ENCODE measurements at regions of chr3 and their contacts with region 1.

Region 1: DNA sequence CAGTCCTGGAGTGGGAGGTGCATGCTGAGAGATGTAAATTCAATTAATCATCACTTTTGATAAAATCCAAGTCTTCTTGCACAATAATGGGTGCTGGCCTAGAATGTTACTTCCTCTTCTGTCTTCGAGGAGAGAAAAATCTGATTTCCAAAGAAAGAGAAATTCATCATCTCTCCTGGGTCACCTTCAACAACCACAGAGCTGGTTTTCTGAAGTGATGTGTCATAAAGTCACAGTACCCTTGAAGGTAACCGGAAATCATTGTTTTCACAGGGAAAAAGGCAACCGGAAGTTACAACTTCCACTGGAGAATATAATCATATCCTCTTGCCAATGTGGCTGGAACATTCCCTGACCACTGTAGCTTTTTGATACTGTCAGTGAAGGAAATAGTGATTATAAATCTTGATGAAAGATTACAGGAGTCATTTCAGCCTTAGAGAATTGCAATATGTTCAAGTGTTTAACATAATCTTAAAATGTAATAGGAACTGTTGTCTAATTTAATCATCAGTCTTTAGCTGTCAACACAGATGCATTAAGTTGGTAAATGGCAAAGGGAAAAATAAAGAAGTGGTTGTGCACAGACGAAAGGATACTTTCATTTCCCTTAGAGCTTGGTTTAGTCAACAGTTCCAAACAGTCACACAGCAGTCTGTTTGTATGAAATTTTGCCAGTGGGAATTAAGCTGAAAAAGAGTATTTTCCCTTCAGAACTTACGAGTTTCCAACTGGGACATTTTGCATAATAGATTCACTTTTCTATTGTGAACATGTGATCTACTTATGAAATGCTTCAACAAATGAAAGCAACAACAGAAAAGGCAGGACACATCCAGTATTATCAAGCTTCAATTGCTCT is 106.5 kb upstream of the SLC4A7 start:
- DNase-seq: no peak
- H3K4me3 ChIP-seq: no peak overlapping the region
- H3K27ac ChIP-seq: peak overlapping the region in 1 of 2 donors; percentile 59
- H3K4me1 ChIP-seq: no peaks in the 10 kb centered on the region
- H3K27me3 ChIP-seq: no peaks in the 10 kb centered on the region
- CTCF ChIP-seq: no peak
- POLR2A ChIP-seq: no peak

Region 2: DNA sequence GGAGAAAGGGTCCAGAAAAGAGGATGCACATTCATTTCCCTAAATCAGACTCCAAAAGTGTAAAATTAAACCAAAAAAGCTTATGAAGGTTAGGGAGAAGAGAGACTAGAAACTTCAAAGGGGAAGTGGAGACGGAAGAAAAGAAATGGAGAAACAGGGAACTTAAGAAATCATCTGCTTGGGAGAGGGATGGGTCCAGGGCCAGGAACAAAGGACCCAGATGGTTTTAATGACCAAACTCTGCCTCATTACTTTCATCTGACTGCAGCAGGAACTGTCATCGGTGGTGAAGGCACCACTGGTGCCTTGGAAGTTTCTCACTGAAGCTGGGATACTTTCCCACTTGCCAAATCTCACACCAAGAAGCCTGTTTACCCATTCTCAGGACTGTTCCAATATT is 36.0 kb before region 1 on chr3:
- intact Hi-C with region 1: no loop called
- DNase-seq: no peak
- H3K4me3 ChIP-seq: no peak overlapping the region
- H3K27ac ChIP-seq: no peak overlapping the region
- H3K4me1 ChIP-seq: no peaks in the 10 kb centered on the region
- H3K27me3 ChIP-seq: no peaks in the 10 kb centered on the region
- CTCF ChIP-seq: no peak
- POLR2A ChIP-seq: no peak

Region 3: DNA sequence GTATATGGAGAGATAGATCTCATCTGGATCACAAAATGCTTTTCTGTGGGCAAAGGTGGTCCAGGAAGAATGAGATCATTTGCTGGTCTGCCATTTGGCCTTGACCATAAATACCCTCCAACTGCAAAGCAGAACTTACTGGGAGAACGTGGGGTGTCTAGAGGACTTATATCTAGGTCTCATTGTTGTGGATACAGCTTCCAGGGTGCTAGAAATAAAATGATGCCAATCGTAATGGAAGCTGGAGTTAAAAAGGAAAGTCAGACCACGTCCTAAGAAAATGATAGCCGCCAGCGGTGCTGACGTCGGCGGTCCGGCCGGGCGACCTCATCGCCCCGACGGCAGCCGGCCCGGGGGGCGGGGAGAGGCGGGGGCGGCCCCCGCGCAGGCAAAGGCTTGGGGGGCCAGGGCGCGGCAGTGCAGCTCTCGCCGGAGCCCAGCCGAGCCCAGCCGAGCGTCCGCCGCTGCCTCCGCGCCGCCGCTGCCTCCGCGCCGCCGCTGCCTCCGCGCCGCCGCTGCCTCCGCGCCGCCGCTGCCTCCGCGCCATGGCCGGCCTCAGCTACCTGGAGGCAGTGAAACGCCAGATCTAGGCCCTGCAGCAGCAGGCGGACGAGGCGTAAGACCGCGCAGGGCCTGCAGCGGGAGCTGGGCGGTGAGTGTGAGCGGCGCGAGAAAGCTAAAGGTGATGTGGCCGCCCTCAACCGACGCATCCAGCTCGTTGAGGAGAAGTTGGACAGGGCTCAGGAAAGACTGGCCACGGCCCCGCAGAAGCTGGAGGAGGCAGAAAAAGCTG is 42.0 kb after region 1 on chr3:
- intact Hi-C with region 1: loop called (anchors 5 kb)
- DNase-seq: peak; percentile 16
- H3K4me3 ChIP-seq: peak overlapping the region; percentile 37 to 40
- H3K27ac ChIP-seq: peak overlapping the region; percentile 69 to 71
- H3K4me1 ChIP-seq: no peaks in the 10 kb centered on the region
- H3K27me3 ChIP-seq: no peaks in the 10 kb centered on the region
- CTCF ChIP-seq: no peak
- POLR2A ChIP-seq: no peak

Region 4: GRCh38 chr3:27914199-27914598 is 323.5 kb after region 1 on chr3:
- intact Hi-C with region 1: no loop called
- DNase-seq: no peak
- H3K4me3 ChIP-seq: no peak overlapping the region
- H3K27ac ChIP-seq: no peak overlapping the region
- H3K4me1 ChIP-seq: no peaks in the 10 kb centered on the region
- H3K27me3 ChIP-seq: no peaks in the 10 kb centered on the region
- CTCF ChIP-seq: no peak
- POLR2A ChIP-seq: no peak

Measured in prostate gland (tissue), 2 donors.